Activated naive CD4-positive, alpha-beta T cell treated with anti-CD3 and anti-CD28 coated beads, Interleukin-2, amount 10 ng/mL, durations not matched to agents 7 days and 5 days (primary cell): ENCODE measurements at regions of chr16 and their contacts with region 1.

Region 1: DNA sequence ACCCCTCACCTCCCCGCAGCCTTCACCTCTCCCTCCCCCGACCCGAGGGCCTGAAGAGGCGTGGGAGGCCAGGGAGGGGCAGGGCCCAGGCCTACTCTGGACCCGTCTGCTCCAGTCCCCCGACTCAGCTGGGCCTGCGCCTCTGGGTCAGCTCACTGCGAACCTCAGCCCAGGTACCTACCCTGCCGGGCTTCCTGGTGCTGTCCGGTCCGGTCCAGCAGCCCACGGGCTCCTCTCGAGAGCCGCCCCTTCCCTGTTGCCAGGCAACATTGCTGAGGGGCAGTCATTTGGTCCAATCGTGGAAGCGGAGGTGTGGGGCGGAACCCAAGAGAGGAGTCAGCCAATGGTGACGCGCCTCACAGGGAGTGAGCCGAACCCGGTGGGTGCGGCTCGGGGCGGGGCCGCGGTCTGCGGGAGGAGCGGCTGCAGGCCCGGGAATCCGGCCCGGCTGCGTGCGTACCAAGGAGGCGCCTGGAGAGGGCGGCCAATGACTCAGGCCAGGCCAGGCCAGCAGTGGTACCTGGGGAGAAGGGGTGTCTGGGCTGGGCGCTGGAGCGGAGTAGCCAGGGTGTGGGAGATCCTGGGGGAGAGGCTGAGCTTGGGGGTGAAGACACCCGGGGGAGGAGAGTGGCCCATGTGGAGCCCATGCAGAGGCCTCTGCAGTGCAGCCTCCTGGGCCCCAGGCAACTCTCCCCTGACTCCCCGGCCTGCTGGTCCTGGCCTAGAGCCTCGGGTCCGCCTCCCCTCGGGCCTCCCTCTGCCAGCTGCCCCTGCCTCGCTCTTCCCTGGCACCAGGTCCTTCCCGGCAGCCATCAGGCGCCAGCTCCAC is at the start of gene MEAK7:
- DNase-seq: peak; percentile 98
- H3K4me3 Mint-ChIP-seq: peak within 1 kb of the TSS; percentile 81
- H3K27ac Mint-ChIP-seq: peak within 1 kb of the TSS; percentile 79
- H3K4me1 Mint-ChIP-seq: peaks cover 66% of the 10 kb centered on the region
- H3K27me3 Mint-ChIP-seq: peaks cover 5% of the 10 kb centered on the region

Region 2: DNA sequence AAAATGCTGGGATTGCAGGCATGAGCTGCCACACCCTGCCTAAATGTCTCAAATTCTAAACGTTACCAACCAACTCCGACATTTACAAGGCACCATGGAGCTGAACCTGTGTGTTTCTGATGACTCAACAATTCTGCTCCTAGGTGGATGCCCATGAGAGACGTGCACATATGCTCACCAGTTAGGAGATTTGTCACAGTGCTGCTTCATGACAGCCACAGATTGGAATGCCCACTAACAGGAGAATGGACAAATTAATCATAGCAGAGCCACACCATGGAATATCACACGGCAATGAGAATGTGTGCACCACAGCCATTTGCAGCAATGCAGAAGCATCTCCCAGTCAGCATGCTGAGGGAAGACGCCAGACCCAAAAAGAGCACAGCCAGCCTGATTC is 256.8 kb before region 1 on chr16:
- CTCF ChIA-PET with region 1: no interaction called
- DNase-seq: no peak
- H3K4me3 Mint-ChIP-seq: no peak overlapping the region
- H3K27ac Mint-ChIP-seq: no peak overlapping the region
- H3K4me1 Mint-ChIP-seq: no peaks in the 10 kb centered on the region
- H3K27me3 Mint-ChIP-seq: peaks cover 32% of the 10 kb centered on the region

Region 3: DNA sequence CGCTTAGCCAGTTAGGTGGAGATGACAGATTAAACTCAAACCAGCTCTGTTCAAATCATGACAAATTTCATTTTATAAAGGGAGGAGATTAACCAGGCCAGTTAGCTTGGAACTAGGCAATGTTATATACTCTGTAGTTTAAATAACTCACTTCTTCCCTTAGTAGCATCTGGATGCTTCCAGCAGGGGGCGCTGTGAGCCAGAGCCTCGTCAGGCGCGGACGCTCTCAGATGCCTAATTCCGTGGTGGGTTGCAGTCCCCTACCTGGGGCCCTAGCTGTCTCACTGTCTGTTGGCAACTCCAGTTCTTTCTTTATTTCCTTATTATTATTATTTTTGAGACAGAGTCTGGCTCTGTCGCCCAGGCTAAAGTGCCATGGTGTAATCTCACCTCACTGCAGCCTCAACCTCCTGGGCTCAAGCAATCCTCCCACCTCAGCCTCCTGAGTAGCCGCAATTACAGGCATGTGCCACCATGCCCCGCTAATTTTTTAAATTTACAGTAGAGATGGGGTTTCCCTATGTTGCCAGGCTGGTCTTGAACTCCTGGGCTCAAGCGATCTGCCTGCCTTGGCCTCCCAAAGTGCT is 227.3 kb before region 1 on chr16:
- CTCF ChIA-PET with region 1: interaction called, 32 read pairs
- DNase-seq: peak; percentile 82
- H3K4me3 Mint-ChIP-seq: no peak overlapping the region
- H3K27ac Mint-ChIP-seq: no peak overlapping the region
- H3K4me1 Mint-ChIP-seq: no peaks in the 10 kb centered on the region
- H3K27me3 Mint-ChIP-seq: peaks cover 16% of the 10 kb centered on the region

Region 4: GRCh38 chr16:84553873-84554399 is 49.3 kb after region 1 on chr16:
- CTCF ChIA-PET with region 1: interaction called, 26 read pairs
- DNase-seq: peak; percentile 80
- H3K4me3 Mint-ChIP-seq: peak overlapping the region; percentile 93
- H3K27ac Mint-ChIP-seq: peak overlapping the region; percentile 91
- H3K4me1 Mint-ChIP-seq: peaks cover 55% of the 10 kb centered on the region
- H3K27me3 Mint-ChIP-seq: no peaks in the 10 kb centered on the region